AG04450 (cell line): ENCODE measurements at regions of chr9 and their contacts with region 1.

Region 1: GRCh38 chr9:125843646-125844045 is 96.5 kb downstream of the PBX3 start:
- DNase-seq: no peak
- H3K4me3 ChIP-seq: no peak overlapping the region
- H3K27ac ChIP-seq: no peak overlapping the region
- H3K27me3 ChIP-seq: no peaks in the 10 kb centered on the region
- CTCF ChIP-seq: no peak

Region 2: GRCh38 chr9:125829743-125830142 is 13.9 kb before region 1 on chr9:
- CTCF ChIA-PET with region 1: no interaction called
- POLR2A ChIA-PET with region 1: interaction called, 10 read pairs
- DNase-seq: no peak
- H3K4me3 ChIP-seq: peak overlapping the region; percentile 41
- H3K27ac ChIP-seq: no peak overlapping the region
- H3K27me3 ChIP-seq: no peaks in the 10 kb centered on the region
- CTCF ChIP-seq: no peak

Region 3: DNA sequence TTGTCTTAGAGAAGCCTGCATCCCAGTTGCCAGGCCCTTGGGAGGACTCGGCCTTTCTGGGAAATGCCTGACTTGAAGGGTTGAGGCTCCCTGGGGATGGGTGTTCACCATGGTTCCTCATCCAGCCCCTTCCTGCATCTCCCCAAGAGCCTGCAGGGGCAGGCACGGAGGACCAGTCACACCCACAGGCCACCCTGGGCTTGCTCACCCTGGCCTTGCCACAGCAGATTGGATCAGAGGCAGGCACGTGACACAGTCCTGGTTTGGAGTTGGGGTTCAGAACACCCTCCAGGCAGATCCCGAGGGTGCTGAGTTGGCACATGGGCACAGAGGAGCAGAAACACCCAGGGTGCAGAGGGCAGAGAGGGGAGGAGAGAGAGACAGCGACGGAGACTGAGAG is 189.7 kb after region 1 on chr9:
- CTCF ChIA-PET with region 1: interaction called, 13 read pairs
- POLR2A ChIA-PET with region 1: no interaction called
- DNase-seq: no peak
- H3K4me3 ChIP-seq: no peak overlapping the region
- H3K27ac ChIP-seq: no peak overlapping the region
- H3K27me3 ChIP-seq: peaks cover 8% of the 10 kb centered on the region
- CTCF ChIP-seq: no peak